H1 (cell line): ENCODE measurements at regions of chr9 and their contacts with region 1.

Region 1: DNA sequence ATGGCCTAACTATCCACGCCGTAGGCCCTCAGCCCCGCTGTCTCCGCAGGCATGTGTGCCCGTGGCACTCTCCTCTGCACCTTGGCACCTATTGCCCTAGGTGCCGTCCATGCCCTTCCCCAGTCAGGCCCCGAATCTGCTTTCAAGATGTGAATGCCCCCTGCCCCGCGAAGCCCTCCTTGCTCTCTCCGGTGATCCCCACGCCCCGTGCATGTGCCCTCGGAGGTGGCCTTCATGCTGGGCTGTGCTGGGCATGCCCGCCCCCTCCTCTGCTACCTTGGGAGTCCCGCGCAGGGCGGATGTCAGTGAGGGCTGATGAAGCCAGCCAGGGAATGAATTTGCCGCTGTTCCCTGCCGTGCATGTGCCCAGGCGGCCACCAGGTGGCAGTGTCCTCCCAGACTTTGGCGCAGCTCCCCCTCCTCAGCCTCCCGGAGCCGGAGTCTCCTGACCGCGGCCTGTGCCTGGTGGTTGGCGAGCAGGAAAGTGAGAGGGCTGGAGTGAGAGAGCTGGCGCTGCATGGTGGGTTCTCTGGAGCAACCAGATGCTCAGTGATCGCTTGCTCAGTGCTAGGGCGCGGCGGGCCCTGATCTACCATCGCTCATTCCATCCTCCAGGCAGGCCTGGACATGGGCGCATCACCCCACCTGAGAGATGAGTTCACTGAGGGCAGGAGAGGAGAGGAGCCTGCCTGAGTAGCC is 112.9 kb upstream of the LMX1B start:
- DNase-seq: peak; percentile 82 to 94
- H3K4me3 ChIP-seq: peak overlapping the region in 3 of 4 experiments; percentile 44 to 72 (median 53); a peak in 7 of 8 replicates
- H3K27ac ChIP-seq: no peak overlapping the region
- H3K4me1 ChIP-seq: peaks cover 0 to 11% (median 8%) of the 10 kb centered on the region in 4 experiments; a peak in 6 of 7 replicates
- H3K27me3 ChIP-seq: peaks cover 0 to 10% (median 3%) of the 10 kb centered on the region in 4 experiments; a peak in 5 of 7 replicates
- CTCF ChIP-seq: peak in 2 of 3 experiments; percentile 98 to 99; a peak in 3 of 4 replicates
- EP300 ChIP-seq: peak in 1 of 2 experiments; percentile 54; a peak in 1 of 3 replicates
- POLR2A ChIP-seq: no peak
- RAD21 ChIP-seq: peak; percentile 98

Region 2: DNA sequence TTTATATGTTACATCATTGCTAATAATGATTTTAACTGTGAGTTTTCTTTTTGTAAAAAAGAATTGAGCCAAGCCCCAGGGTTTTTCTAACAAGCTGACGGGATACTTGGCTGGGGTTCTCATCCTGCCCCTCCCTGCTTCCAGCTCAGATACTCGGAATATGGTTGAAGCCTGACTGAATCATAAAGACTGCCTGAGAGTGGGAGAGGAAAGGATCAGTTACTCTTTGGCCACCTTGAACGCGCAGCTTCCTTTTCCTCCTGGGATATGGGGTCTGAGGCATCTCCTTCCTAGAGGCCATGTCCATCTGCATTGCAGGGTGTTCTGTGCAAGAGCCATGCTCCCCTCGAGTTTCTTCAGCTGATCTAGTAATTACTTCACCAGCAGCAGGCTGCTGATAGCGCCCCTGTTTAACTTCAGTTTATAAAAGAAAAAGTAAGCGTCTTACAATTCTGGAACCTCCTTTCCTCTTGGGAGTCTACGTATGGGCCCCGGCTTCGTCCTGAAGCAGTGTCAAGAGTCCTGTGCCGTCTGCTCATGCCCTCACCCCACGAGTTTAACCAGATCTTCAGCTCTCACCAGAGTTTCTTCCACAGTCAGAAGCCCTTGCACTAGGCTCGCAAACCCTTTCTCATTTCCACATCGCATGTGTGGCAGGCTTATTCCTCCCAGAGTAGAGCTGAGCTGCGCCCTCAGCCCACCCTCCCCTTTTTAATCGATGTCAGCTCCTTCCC is 44.2 kb before region 1 on chr9:
- CTCF ChIA-PET with region 1: no interaction called
- POLR2A ChIA-PET with region 1: no interaction called
- DNase-seq: no peak
- H3K4me3 ChIP-seq: no peak overlapping the region
- H3K27ac ChIP-seq: no peak overlapping the region
- H3K4me1 ChIP-seq: peaks cover 0 to 4% (median 0%) of the 10 kb centered on the region in 4 experiments; a peak in 2 of 7 replicates
- H3K27me3 ChIP-seq: no peaks in the 10 kb centered on the region
- CTCF ChIP-seq: no peak
- EP300 ChIP-seq: no peak
- POLR2A ChIP-seq: no peak
- RAD21 ChIP-seq: no peak

Region 3: DNA sequence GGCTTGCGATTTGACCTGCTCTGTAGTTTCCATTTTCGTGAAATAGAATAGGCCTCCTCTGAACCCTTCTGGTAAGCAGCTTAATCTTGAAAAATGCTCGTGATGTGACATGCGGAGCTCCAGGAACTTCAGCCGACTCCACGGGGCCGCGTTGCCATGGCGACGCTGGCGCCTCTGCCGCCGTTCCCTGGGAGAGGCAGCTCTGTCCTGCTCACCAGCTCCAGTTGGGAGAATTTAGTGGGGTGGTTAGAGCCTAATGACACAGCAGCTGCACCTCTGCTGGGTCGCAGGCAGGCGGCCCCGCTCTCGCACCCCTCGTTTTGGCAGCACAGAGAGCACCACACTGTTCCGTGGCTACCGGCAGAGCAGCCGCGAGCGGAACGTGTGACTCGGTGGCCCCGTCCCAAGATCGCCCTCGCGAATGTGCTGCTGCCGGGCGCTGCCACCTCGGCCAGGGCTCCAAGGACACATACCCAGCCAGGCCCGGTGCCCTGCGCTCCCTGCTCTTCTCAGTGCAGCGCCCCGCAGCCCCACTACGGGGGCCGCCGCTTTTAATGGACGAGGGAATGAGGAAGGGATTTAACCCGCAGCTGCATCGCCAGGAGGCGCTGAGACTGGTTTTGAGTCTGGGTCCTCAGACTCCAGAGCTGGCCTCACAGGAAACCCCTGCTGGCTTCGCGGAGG is 18.3 kb before region 1 on chr9:
- CTCF ChIA-PET with region 1: interaction called, 39 read pairs
- POLR2A ChIA-PET with region 1: no interaction called
- DNase-seq: peak; percentile 36 to 79
- H3K4me3 ChIP-seq: peak overlapping the region; percentile 7 to 53 (median 42); a peak in 7 of 8 replicates
- H3K27ac ChIP-seq: no peak overlapping the region
- H3K4me1 ChIP-seq: peaks cover 0 to 4% (median 2%) of the 10 kb centered on the region in 4 experiments; a peak in 3 of 7 replicates
- H3K27me3 ChIP-seq: peaks cover 0 to 5% (median 0%) of the 10 kb centered on the region in 4 experiments; a peak in 3 of 7 replicates
- CTCF ChIP-seq: peak; percentile 38 to 64 (median 52)
- EP300 ChIP-seq: no peak
- POLR2A ChIP-seq: no peak
- RAD21 ChIP-seq: peak in 1 of 2 experiments; percentile 23; a peak in 1 of 4 replicates

Region 4: DNA sequence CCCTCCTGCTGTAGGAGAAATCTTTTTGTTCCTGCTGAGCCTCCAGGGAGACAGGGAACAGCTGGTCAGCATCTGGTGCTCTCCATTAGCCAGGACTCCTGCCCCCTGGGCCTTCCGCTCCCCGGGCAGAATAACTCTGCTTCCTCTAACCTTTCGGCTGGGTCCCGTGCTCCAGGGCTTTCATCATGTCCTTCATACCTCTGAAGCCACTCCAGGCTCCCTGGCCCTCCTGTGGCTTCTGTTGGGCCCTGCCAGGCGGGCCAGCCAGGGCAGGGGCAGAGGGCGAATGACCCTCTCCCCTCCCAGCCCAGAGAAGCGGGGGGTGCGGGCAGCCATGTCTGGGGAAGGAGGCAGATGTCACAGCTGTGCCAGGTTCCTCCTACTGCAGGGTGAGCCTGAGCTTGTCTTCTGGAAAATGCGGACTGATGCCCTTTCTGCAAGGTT is 31.2 kb after region 1 on chr9:
- CTCF ChIA-PET with region 1: interaction called, 16 read pairs
- POLR2A ChIA-PET with region 1: no interaction called
- DNase-seq: no peak
- H3K4me3 ChIP-seq: no peak overlapping the region
- H3K27ac ChIP-seq: no peak overlapping the region
- H3K4me1 ChIP-seq: peaks cover 14 to 38% (median 19%) of the 10 kb centered on the region in 4 experiments
- H3K27me3 ChIP-seq: peaks cover 0 to 8% (median 5%) of the 10 kb centered on the region in 4 experiments; a peak in 5 of 7 replicates
- CTCF ChIP-seq: no peak
- EP300 ChIP-seq: no peak
- POLR2A ChIP-seq: no peak
- RAD21 ChIP-seq: no peak

Region 5: DNA sequence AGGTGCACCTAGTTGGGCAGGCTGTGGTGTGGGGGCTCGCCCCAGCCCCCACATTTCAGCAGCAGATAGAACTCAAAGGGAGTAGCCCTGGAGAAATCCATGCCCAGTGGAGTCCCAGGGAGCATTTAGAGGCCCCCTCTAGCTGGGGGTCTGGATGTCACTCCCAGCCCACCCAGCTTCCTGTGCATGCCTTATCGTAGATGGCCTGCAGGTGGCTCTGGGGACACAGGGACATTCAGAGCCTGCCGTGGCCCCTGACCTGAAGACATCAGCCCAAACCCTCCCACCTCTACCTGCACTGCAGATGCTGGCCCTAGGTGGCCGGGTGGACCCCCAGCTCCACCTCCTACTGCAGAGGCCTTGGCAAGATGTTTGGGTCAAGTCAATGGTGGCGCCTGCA is 63.9 kb after region 1 on chr9:
- CTCF ChIA-PET with region 1: interaction called, 85 read pairs
- POLR2A ChIA-PET with region 1: no interaction called
- DNase-seq: no peak
- H3K4me3 ChIP-seq: no peak overlapping the region
- H3K27ac ChIP-seq: no peak overlapping the region
- H3K4me1 ChIP-seq: no peaks in the 10 kb centered on the region; a peak in 1 of 7 replicates
- H3K27me3 ChIP-seq: peaks cover 0 to 3% (median 0%) of the 10 kb centered on the region in 4 experiments; a peak in 2 of 7 replicates
- CTCF ChIP-seq: peak; percentile 69 to 73 (median 71)
- EP300 ChIP-seq: no peak
- POLR2A ChIP-seq: no peak
- RAD21 ChIP-seq: peak; percentile 41 to 64